ENCODE measurements at regions of chr1 and their contacts with region 1.

Region 1: GRCh38 chr1:182175361-182175931 is 113.9 kb upstream of the ZNF648 start:
- DNase-seq: peak; percentile 84
- H3K4me3 Mint-ChIP-seq: no peak overlapping the region
- H3K27ac Mint-ChIP-seq: peak overlapping the region; percentile 74
- H3K4me1 Mint-ChIP-seq: peaks cover 40% of the 10 kb centered on the region
- H3K27me3 Mint-ChIP-seq: no peaks in the 10 kb centered on the region
- CTCF ChIP-seq: no peak

Region 2: DNA sequence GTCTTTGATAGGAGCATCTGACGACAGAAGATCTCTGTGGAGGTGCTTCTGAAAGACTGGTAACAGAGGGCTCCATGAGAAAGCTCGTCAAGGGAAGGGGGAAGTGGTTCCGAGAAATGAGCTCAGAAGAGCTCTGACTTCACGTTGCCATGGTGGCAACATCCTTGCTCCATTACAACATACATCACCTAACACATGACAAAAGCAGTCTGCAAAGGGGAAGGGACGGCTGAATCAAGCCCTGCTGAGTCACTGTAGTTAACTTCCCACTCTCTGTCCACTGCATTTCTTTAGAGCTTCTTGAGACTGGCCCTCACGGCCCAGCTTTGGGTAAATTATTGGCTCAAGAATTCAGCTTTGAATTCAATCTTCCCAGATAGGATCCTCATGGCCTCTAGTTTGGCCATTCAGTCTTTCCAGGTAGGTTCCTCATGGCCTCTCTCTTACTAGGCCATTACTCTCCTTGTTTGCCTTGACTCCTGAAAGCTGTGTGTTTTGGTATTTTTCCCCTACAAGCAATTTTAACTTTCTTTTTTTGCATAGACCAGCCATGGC is 26.0 kb before region 1 on chr1:
- CTCF ChIA-PET with region 1: interaction called, 163 read pairs
- POLR2A ChIA-PET with region 1: interaction called, 321 read pairs
- intact Hi-C with region 1: no loop called
- DNase-seq: peak; percentile 82
- H3K4me3 Mint-ChIP-seq: no peak overlapping the region
- H3K27ac Mint-ChIP-seq: peak overlapping the region; percentile 24
- H3K4me1 Mint-ChIP-seq: peaks cover 34% of the 10 kb centered on the region
- H3K27me3 Mint-ChIP-seq: no peaks in the 10 kb centered on the region
- CTCF ChIP-seq: no peak

Region 3: DNA sequence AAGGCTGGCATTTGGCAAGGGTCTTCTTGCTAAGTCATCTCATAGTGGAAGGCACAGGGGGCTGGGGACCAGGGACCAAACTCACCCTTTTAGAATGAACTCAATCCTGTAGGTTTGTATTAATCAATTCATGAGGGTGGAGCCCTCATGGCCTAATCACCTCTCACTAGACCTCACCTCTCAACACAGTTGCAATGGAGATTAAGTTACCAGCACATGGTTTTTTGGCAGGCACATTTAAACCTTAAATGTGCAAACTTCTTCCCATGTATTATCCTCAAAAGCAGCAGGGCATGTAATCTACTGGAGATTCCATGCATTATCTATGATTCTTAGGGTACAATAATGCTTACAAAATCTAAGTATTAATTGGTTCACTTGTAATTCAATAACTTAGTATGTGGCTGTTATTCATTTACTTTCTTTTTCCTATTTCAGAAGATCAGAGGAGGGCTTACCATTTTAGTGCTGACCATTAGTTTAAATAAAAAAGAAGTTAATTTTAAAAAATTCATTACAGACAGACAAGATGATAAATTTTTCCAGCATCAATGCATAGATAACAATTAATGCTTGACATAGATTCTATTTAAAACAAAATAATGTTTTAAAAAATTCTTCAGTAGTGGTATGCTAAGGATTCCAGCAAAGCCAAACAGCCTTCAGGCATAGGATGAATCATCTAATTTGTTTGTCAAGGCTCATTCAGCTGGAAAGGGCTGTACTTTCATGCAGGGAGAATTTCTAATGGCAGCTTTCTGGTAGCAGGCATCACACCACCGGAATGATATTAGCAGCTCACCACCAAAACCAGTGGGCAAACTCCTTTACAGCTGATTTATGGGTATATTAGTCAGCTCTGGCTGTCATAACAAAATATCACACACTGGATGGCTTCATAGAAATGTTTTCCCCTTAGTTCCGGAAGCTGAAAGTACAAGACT is 10.6 kb after region 1 on chr1:
- CTCF ChIA-PET with region 1: interaction called, 8 read pairs
- POLR2A ChIA-PET with region 1: interaction called, 75 read pairs
- intact Hi-C with region 1: no loop called
- DNase-seq: peak; percentile 91
- H3K4me3 Mint-ChIP-seq: peak overlapping the region; percentile 10
- H3K27ac Mint-ChIP-seq: peak overlapping the region; percentile 81
- H3K4me1 Mint-ChIP-seq: peaks cover 58% of the 10 kb centered on the region
- H3K27me3 Mint-ChIP-seq: no peaks in the 10 kb centered on the region
- CTCF ChIP-seq: no peak

Region 4: GRCh38 chr1:182215764-182216163 is 40.3 kb after region 1 on chr1:
- CTCF ChIA-PET with region 1: interaction called, 3 read pairs
- POLR2A ChIA-PET with region 1: interaction called, 34 read pairs
- intact Hi-C with region 1: no loop called
- DNase-seq: peak; percentile 28
- H3K4me3 Mint-ChIP-seq: no peak overlapping the region
- H3K27ac Mint-ChIP-seq: peak overlapping the region; percentile 7
- H3K4me1 Mint-ChIP-seq: peaks cover 32% of the 10 kb centered on the region
- H3K27me3 Mint-ChIP-seq: no peaks in the 10 kb centered on the region
- CTCF ChIP-seq: no peak

Region 5: GRCh38 chr1:182229921-182230491 is 54.6 kb after region 1 on chr1:
- CTCF ChIA-PET with region 1: no interaction called
- POLR2A ChIA-PET with region 1: no interaction called
- intact Hi-C with region 1: no loop called
- DNase-seq: no peak
- H3K4me3 Mint-ChIP-seq: no peak overlapping the region
- H3K27ac Mint-ChIP-seq: no peak overlapping the region
- H3K4me1 Mint-ChIP-seq: peaks cover 11% of the 10 kb centered on the region
- H3K27me3 Mint-ChIP-seq: no peaks in the 10 kb centered on the region
- CTCF ChIP-seq: no peak

Region 6: GRCh38 chr1:182374101-182374834 is 198.8 kb after region 1 on chr1:
- CTCF ChIA-PET with region 1: no interaction called
- POLR2A ChIA-PET with region 1: interaction called, 30 read pairs
- intact Hi-C with region 1: no loop called
- DNase-seq: no peak
- H3K4me3 Mint-ChIP-seq: no peak overlapping the region
- H3K27ac Mint-ChIP-seq: no peak overlapping the region
- H3K4me1 Mint-ChIP-seq: peaks cover 7% of the 10 kb centered on the region
- H3K27me3 Mint-ChIP-seq: no peaks in the 10 kb centered on the region
- CTCF ChIP-seq: no peak

Region 7: DNA sequence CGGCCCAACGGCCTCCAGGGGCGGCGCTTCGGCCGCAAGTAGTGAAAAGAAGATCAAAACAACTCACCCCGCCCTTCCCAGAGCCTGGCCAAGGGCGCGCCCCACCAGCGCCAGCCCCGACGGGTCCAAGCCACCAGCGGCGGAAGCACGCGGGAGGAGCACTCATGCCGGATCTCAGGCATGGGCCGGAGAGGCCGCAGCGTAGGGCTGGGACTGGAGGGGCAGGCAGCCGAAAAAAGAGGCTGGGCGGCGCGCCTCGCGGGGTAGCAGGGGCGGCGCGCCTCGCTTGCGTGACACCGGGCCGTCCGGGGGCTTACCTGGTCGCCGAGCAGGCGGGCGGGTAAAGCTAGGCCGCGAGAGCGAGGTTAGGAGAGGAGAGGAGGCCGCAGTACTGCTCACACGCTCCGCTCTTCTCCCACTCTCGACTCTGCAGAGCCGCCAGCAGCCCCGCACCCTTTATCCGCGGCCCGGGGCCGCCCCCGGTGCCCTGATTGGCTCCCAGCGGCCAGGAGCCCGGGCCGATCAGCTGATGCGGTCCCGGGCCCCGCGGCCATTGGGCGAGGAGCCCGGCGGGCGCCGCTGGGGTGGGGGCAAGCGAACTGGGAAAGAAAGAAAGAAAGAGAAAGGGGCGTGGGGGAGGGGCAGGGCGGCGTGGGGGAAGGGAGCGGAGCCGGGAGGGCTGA is 216.1 kb after region 1 on chr1 and contains the start of gene GLUL:
- CTCF ChIA-PET with region 1: interaction called, 6 read pairs
- POLR2A ChIA-PET with region 1: interaction called, 25 read pairs
- intact Hi-C with region 1: no loop called
- DNase-seq: peak; percentile 90
- H3K4me3 Mint-ChIP-seq: peak within 1 kb of the TSS; percentile 100
- H3K27ac Mint-ChIP-seq: peak within 1 kb of the TSS; percentile 100
- H3K4me1 Mint-ChIP-seq: peaks cover 27% of the 10 kb centered on the region
- H3K27me3 Mint-ChIP-seq: no peaks in the 10 kb centered on the region
- CTCF ChIP-seq: peak; percentile 2
- total RNA-seq, gene GLUL: 240 and 437 TPM in 2 replicates

Region 8: GRCh38 chr1:183069562-183070216 is 894.2 kb after region 1 on chr1:
- CTCF ChIA-PET with region 1: no interaction called
- POLR2A ChIA-PET with region 1: no interaction called
- intact Hi-C with region 1: no loop called
- DNase-seq: peak; percentile 62
- H3K4me3 Mint-ChIP-seq: no peak overlapping the region
- H3K27ac Mint-ChIP-seq: peak overlapping the region; percentile 73
- H3K4me1 Mint-ChIP-seq: peaks cover 44% of the 10 kb centered on the region
- H3K27me3 Mint-ChIP-seq: no peaks in the 10 kb centered on the region
- CTCF ChIP-seq: no peak

Measured in MCF 10A (cell line).